PC-9 (cell line): ENCODE measurements at regions of chr14 and their contacts with region 1.

Region 1: GRCh38 chr14:77616454-77617229 is at the start of gene SPTLC2:
- DNase-seq: peak; percentile 100
- H3K4me3 ChIP-seq: peak within 1 kb of the TSS; percentile 85
- H3K27ac ChIP-seq: peak within 1 kb of the TSS; percentile 76
- H3K4me1 ChIP-seq: peaks cover 50% of the 10 kb centered on the region
- H3K27me3 ChIP-seq: no peaks in the 10 kb centered on the region
- CTCF ChIP-seq: no peak
- total RNA-seq, gene SPTLC2: 68.4 and 81.7 TPM in 2 replicates

Region 2: GRCh38 chr14:77580964-77581505 is 35.6 kb before region 1 on chr14:
- CTCF ChIA-PET with region 1: interaction called, 3 read pairs
- POLR2A ChIA-PET with region 1: no interaction called
- intact Hi-C with region 1: loop called (anchors 2 kb)
- DNase-seq: peak in 1 of 2 experiments; percentile 73
- H3K4me3 ChIP-seq: no peak overlapping the region
- H3K27ac ChIP-seq: peak overlapping the region; percentile 48
- H3K4me1 ChIP-seq: no peaks in the 10 kb centered on the region; the same call in 1 of the 2 replicates
- H3K27me3 ChIP-seq: no peaks in the 10 kb centered on the region
- CTCF ChIP-seq: no peak

Region 3: GRCh38 chr14:77593501-77593961 is 23.1 kb before region 1 on chr14:
- CTCF ChIA-PET with region 1: no interaction called
- POLR2A ChIA-PET with region 1: no interaction called
- intact Hi-C with region 1: loop called (anchors 2 kb)
- DNase-seq: peak in 1 of 2 experiments; percentile 99
- H3K4me3 ChIP-seq: peak overlapping the region; percentile 5; the same call in 1 of the 2 replicates
- H3K27ac ChIP-seq: peak overlapping the region; percentile 77
- H3K4me1 ChIP-seq: peaks cover 53% of the 10 kb centered on the region
- H3K27me3 ChIP-seq: no peaks in the 10 kb centered on the region
- CTCF ChIP-seq: no peak

Region 4: GRCh38 chr14:77641534-77642341 is 25.1 kb after region 1 on chr14:
- CTCF ChIA-PET with region 1: interaction called, 4 read pairs
- POLR2A ChIA-PET with region 1: no interaction called
- intact Hi-C with region 1: loop called (anchors 2 kb)
- DNase-seq: peak; percentile 32 to 77
- H3K4me3 ChIP-seq: no peak overlapping the region
- H3K27ac ChIP-seq: no peak overlapping the region
- H3K4me1 ChIP-seq: peaks cover 38% of the 10 kb centered on the region
- H3K27me3 ChIP-seq: no peaks in the 10 kb centered on the region
- CTCF ChIP-seq: no peak

Region 5: DNA sequence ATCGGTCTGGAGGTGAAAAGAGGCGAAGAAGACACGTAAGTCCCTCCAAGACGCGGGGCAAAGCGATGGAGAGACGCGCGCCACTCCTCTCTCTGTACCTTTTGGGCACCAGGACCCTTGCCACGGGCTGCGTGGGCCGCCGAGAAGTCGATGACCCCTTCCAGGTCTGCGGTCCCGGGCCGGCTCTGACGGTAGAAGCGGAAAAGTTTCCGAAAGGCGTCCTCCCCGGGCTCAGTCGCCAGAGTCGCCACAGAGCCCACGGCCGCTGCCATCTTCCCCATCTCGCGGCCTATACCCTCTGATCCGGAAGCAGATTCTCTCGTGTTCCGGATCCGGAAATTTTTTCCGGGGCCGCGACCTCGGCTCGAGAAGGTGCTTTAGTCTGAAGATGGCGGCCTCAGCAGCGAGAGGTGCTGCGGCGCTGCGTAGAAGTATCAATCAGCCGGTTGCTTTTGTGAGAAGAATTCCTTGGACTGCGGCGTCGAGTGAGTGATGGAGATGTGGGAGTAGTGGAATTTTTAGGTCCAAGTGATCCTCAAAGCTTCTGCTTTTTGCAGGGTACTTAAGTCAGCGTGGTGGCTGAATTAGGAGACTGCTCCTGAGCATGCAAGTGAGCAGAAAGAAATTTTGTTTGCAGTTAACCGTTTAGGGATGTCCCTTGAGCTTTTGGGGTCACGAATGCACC is 91.2 kb after region 1 on chr14 and contains the starts of genes ALKBH1 and SLIRP:
- CTCF ChIA-PET with region 1: no interaction called
- POLR2A ChIA-PET with region 1: no interaction called
- intact Hi-C with region 1: loop called (anchors 2 kb)
- DNase-seq: peak; percentile 88 to 92
- H3K4me3 ChIP-seq: peak within 1 kb of the TSS; percentile 74
- H3K27ac ChIP-seq: peak within 1 kb of the TSS; percentile 27
- H3K4me1 ChIP-seq: peaks cover 25% of the 10 kb centered on the region
- H3K27me3 ChIP-seq: no peaks in the 10 kb centered on the region
- CTCF ChIP-seq: no peak; the same call in 1 of the 2 replicates
- total RNA-seq, gene ALKBH1: 22.7 and 25.0 TPM in 2 replicates
- total RNA-seq, gene SLIRP: 298 and 375 TPM in 2 replicates

Region 6: DNA sequence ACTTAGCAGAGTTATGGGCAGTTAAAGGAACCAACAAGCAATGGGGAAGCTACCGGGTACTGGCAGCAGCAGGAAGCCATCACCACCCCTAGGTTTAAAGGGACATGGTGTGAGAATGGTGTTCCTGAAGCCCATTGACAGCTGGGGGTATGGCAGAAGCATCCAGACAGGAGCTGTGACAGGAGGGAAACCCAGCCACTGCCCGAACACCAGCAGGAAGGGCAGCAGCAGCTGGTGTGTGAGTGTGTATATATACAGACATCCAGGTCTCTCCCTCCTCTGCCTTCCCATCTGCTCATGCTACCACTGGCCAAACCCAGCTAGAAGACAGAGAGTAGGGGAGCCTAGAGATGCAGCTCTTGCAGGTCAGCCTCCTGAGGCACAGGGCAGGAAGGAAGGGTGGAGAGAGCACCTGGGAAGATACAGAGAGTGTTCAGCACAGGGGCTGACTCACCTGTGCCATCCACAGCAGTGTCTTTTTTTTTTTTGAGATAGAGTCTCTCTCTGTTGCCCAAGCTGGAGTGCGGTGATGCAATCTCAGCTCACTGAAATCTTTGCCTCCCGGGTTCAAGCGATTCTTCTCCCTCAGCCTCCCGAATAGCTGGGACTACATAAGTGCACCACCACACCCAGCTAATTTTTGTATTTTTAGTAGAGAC is 174.1 kb after region 1 on chr14:
- CTCF ChIA-PET with region 1: no interaction called
- POLR2A ChIA-PET with region 1: interaction called, 40 read pairs
- intact Hi-C with region 1: no loop called
- DNase-seq: no peak
- H3K4me3 ChIP-seq: no peak overlapping the region
- H3K27ac ChIP-seq: no peak overlapping the region
- H3K4me1 ChIP-seq: peaks cover 25% of the 10 kb centered on the region
- H3K27me3 ChIP-seq: no peaks in the 10 kb centered on the region
- CTCF ChIP-seq: no peak